ENCODE measurements at regions of chr20 and their contacts with region 1.

Region 1: GRCh38 chr20:51595058-51595532 is 52.6 kb upstream of the NFATC2 start:
- DNase-seq: peak; percentile 48
- H3K4me3 ChIP-seq: no peak overlapping the region
- H3K27ac ChIP-seq: no peak overlapping the region
- H3K4me1 ChIP-seq: no peaks in the 10 kb centered on the region
- H3K27me3 ChIP-seq: peaks cover 9% of the 10 kb centered on the region
- CTCF ChIP-seq: peak; percentile 88 to 99 (median 95)

Region 2: DNA sequence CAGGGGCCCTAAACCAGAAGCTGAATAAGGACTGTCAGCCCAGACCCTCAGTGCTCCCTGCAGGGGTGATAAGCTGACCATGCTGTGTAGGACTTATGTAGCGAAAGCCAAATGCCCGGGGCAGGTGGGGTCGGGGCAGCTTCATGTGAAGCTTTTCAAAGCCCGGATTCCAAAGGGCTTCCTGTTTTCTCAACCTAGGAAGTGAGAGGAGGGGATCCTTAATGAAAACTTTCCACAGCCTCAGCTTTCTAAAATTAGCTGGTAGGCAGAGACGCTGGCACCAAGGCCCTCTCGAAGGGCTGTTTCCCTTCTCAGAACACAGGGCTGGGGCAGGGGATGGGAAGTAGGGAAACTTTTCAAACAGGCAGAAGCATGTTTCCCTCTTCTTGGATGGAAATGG is 201.5 kb before region 1 on chr20:
- dilution Hi-C with region 1: loop called (anchors 5 kb)
- DNase-seq: no peak
- H3K4me3 ChIP-seq: no peak overlapping the region
- H3K27ac ChIP-seq: no peak overlapping the region
- H3K4me1 ChIP-seq: peaks cover 7% of the 10 kb centered on the region
- H3K27me3 ChIP-seq: peaks cover 28% of the 10 kb centered on the region
- CTCF ChIP-seq: no peak

Measured in keratinocyte (primary cell).